Activated CD4-positive, alpha-beta memory T cell treated with anti-CD3 and anti-CD28 coated beads, Interleukin-2, amount 10 ng/mL, durations not matched to agents 7 days and 5 days (primary cell): ENCODE measurements at regions of chr10 and their contacts with region 1.

Region 1: DNA sequence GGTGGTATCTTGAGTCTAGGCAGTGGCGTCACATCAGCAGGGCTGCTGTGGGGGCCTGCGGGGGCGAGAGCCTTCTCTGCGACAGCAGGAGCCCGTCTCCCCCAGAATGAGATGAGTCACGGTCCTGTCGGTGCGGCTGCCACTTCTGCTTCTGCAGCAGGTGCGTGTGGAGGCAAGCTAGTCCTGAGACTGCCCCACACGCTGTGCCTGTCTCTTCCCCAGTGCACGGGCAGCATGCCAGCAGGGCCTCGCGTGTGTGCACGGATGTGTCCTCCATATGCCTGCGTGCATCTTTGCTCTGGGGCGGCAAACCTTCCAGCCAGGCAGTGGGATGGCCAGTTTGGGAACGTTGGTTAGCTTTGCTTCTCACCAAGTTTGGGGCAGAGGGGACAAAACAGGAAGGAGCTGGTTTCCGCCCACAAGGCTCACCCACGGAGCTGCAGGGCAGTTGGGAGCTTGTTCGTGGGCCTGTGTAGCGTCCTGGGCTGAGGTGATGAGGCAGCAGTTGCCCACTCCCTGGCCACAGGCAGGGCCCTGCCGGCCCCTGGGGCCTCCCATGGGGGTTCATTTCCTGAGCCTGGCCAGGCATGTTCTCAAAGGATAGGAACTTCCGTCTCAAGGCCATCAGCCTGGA is 60.8 kb upstream of the PPIF start:
- DNase-seq: peak; percentile 89
- H3K4me3 Mint-ChIP-seq: peak overlapping the region; percentile 61
- H3K27ac Mint-ChIP-seq: peak overlapping the region; percentile 98
- H3K4me1 Mint-ChIP-seq: peaks cover 67% of the 10 kb centered on the region
- H3K27me3 Mint-ChIP-seq: no peaks in the 10 kb centered on the region

Region 2: DNA sequence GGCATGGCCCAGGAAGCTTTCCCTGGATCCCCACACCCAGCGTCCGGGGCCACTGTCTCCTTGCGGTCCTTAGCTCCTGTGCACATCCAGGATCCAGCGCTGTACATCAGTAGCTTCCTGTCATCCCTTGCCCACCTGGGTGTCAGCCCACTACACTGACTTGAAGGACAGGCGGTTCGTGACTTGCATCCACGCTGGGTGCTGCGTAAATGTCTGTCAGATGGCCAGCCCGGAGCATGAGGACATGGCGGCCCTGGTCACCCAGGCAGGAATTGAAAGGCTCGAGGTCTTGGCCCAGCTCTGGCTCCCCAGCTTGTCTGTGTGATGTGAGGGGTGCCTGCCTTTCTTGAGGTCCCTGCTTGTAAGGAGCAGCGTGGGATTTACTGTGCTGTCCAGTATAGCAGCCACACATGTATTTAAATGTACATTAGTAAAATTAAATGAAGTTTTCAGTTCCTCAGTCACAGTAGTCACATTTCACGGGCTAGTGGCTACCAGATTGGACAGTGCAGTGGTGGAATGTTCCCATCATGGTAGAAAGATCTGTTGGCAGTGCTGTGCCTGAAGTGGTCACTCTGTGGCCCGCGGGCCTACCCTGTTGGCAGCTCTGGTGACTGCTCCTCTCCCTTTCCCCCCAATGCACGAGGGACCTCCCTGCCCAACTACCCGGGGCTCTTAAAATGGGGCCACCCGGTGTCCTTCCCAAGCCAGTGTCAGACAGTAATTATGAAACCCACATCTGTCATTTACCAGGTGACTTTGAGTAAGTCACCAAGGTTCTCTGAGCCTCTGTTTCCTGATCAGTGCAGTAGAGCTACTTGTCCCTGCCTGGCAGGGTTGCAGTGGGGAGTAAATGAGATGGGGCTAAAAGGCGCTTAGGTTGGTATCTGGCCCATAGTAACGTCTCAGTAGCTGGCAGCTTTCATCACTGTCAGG is 37.0 kb before region 1 on chr10:
- CTCF ChIA-PET with region 1: interaction called, 4 read pairs
- POLR2A ChIA-PET with region 1: interaction called, 50 read pairs
- DNase-seq: peak; percentile 43
- H3K4me3 Mint-ChIP-seq: peak overlapping the region; percentile 3
- H3K27ac Mint-ChIP-seq: peak overlapping the region; percentile 70
- H3K4me1 Mint-ChIP-seq: peaks cover 74% of the 10 kb centered on the region
- H3K27me3 Mint-ChIP-seq: no peaks in the 10 kb centered on the region

Region 3: GRCh38 chr10:79316671-79317431 is 30.4 kb after region 1 on chr10:
- CTCF ChIA-PET with region 1: interaction called, 13 read pairs
- POLR2A ChIA-PET with region 1: interaction called, 18 read pairs
- DNase-seq: peak; percentile 46
- H3K4me3 Mint-ChIP-seq: peak overlapping the region; percentile 74
- H3K27ac Mint-ChIP-seq: peak overlapping the region; percentile 92
- H3K4me1 Mint-ChIP-seq: peaks cover 65% of the 10 kb centered on the region
- H3K27me3 Mint-ChIP-seq: no peaks in the 10 kb centered on the region

Region 4: DNA sequence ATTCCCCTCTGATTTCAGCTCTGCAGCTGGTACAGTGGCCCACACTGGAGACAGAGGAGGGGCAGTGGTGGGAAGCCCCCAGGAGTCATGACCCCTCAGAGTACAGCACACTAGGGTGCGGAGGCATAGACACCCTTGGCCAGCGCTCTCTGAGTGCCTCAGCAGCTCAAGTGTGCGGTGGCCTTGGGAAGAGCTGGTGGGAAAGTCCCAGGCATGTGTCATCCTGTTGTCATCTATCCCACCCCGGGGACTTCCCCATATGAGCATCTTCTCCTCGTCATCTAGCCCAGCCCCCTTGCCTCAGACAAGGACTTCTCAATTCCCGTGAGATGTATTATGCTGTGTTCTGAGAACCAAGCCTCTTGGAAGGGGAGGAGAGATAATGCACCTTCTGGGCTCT is 45.3 kb after region 1 on chr10:
- CTCF ChIA-PET with region 1: no interaction called
- POLR2A ChIA-PET with region 1: interaction called, 10 read pairs
- DNase-seq: peak; percentile 82
- H3K4me3 Mint-ChIP-seq: no peak overlapping the region
- H3K27ac Mint-ChIP-seq: peak overlapping the region; percentile 70
- H3K4me1 Mint-ChIP-seq: peaks cover 38% of the 10 kb centered on the region
- H3K27me3 Mint-ChIP-seq: no peaks in the 10 kb centered on the region